Right cardiac atrium (tissue), 5 donors: ENCODE measurements at regions of chr1 and their contacts with region 1.

Region 1: GRCh38 chr1:28886731-28887418 is 27.5 kb upstream of the EPB41 start:
- DNase-seq: peak; percentile 82 to 94 (median 94)
- ATAC-seq: peak; percentile 85 to 88
- H3K4me3 ChIP-seq: peak overlapping the region; percentile 67
- H3K27ac ChIP-seq: peak overlapping the region; percentile 21
- H3K4me1 ChIP-seq: no peaks in the 10 kb centered on the region
- H3K27me3 ChIP-seq: no peaks in the 10 kb centered on the region

Region 2: GRCh38 chr1:28480308-28480707 is 406.6 kb before region 1 on chr1:
- intact Hi-C with region 1: no loop called
- DNase-seq: no peak
- ATAC-seq: no peak
- H3K4me3 ChIP-seq: no peak overlapping the region
- H3K27ac ChIP-seq: no peak overlapping the region
- H3K4me1 ChIP-seq: no peaks in the 10 kb centered on the region
- H3K27me3 ChIP-seq: no peaks in the 10 kb centered on the region

Region 3: GRCh38 chr1:28682840-28683239 is 204.0 kb before region 1 on chr1:
- intact Hi-C with region 1: no loop called
- DNase-seq: no peak
- ATAC-seq: no peak
- H3K4me3 ChIP-seq: no peak overlapping the region
- H3K27ac ChIP-seq: no peak overlapping the region
- H3K4me1 ChIP-seq: no peaks in the 10 kb centered on the region
- H3K27me3 ChIP-seq: no peaks in the 10 kb centered on the region

Region 4: DNA sequence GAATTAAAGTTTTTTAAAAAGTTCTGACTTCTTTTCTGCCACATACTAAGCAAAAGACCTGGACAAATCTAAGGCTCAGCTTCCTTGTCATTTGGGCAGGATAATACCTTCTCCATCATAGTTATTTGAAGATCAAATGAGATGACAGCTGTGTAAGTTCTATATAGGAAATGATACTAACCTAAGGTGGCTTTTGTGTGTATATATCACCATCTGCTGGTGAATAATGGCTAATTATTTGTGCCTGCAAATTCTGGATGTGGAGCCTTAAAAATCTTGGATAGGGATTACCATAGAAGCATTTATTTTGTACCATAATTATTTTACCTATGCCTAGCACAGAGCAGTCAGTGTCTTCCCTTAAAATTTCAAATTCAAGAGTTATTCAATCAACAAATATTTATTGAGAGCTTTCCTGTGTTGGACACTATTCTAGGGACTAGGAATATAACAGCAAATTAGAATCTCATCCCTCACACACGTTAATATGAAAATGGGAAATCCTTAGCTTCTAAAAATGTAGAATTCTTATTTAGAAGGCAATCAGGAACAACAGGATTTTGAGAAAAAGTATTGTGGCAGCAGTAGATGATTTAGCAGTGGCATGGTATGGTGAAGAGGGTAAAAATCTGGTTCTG is 147.1 kb after region 1 on chr1:
- intact Hi-C with region 1: loop called (anchors 1 to 5 kb)
- DNase-seq: no peak
- ATAC-seq: peak in 1 of 2 donors; percentile 62
- H3K4me3 ChIP-seq: no peak overlapping the region
- H3K27ac ChIP-seq: no peak overlapping the region
- H3K4me1 ChIP-seq: no peaks in the 10 kb centered on the region
- H3K27me3 ChIP-seq: no peaks in the 10 kb centered on the region

Region 5: DNA sequence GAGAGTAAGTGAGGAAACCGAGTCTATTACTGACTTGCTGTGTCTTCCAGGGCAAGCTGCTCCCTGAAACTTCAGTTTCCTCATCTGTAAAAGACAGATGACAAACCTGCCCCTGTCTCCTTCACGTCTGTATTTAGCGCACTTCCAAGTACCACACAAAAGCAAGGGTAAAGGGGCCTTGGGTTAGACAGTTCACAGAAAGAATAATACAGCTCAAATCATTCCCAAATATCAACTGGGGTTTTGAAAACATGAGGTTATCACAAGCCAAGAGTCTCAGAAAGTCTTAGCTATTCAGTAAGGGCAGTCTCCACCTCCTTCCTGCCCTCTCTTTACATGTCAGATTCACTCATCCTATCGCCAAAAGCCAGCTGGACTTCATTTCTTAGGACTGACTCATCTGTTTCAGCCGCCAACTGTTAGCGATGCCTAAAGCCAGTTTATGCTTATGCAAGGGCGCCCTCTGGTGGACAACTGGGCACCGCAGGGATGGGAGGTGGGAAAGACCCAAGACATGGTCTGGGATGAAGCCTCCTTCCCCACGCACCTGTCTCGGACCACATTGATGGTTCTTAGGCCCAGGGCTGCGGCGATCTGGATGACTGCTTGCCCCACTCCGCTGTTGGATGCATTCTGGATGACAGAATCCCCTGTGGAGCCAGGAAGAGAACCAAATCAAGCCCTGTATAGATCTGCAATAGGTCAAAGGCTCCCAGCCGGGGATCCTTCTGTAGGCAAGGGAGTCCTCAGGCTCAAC is 315.9 kb after region 1 on chr1:
- intact Hi-C with region 1: loop called (anchors 1 to 5 kb)
- DNase-seq: peak; percentile 94 to 98 (median 97)
- ATAC-seq: peak; percentile 95 to 97
- H3K4me3 ChIP-seq: no peak overlapping the region
- H3K27ac ChIP-seq: peak overlapping the region; percentile 85
- H3K4me1 ChIP-seq: peaks cover 2% of the 10 kb centered on the region
- H3K27me3 ChIP-seq: no peaks in the 10 kb centered on the region

Region 6: GRCh38 chr1:29209173-29209572 is 322.3 kb after region 1 on chr1:
- intact Hi-C with region 1: loop called in 1 of 4 experiments (anchors 5 kb)
- DNase-seq: no peak
- ATAC-seq: no peak
- H3K4me3 ChIP-seq: no peak overlapping the region
- H3K27ac ChIP-seq: no peak overlapping the region
- H3K4me1 ChIP-seq: no peaks in the 10 kb centered on the region
- H3K27me3 ChIP-seq: no peaks in the 10 kb centered on the region